Esophagus squamous epithelium (tissue), 5 donors: ENCODE measurements at regions of chr6 and their contacts with region 1.

Region 1: DNA sequence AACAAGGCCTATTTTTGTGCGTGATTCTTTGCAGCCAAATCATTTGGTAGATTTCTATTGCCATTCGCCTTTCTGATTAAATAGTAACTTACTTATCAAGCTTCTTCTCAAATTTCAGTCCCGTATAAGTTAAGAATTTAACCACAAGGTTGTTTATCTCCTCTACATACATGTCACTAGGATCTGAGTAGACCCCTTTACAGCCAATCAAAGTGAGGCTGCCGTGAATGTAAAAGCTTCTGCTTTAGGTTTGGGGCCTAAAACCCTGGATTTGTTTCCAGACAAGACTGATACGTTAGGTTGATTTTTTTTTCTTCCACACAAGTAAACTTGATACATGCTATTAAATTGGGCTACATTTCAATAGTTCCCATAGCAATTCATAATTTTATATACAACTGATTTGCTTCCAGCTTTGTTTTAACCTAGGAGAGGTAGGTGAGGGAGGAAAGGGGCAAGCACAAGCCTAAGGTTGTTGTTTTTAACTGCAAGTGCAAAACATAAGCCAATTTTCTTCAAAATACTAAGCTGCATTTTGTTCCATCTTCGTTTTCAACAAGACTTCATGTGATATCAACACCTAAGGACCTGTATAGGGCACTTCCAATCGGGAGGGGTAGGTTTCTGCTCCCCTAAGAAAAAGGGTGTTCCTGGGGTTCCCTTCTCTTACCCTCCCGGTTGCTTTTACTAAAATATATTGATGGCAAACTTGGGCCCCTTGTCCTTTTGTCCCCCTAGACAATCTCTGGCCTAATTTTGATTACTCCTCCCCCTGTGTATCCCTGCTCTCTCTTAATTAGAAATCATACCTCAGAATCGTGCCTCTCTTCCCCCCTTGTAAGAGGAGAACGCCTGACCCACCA is 1.7 kb downstream of the RANBP9 start:
- DNase-seq: no peak
- H3K4me3 ChIP-seq: peak overlapping the region; percentile 72 to 94 (median 86)
- H3K27ac ChIP-seq: peak overlapping the region; percentile 95 to 99 (median 98)
- H3K4me1 ChIP-seq: peaks cover 0 to 61% (median 10%) of the 10 kb centered on the region in 3 donors
- H3K27me3 ChIP-seq: no peaks in the 10 kb centered on the region
- CTCF ChIP-seq: no peak
- POLR2A ChIP-seq: no peak

Region 2: GRCh38 chr6:13487122-13488014 is 222.6 kb before region 1 on chr6 and contains the start of gene GFOD1:
- intact Hi-C with region 1: no loop called
- DNase-seq: peak; percentile 53
- H3K4me3 ChIP-seq: peak within 1 kb of the TSS; percentile 67 to 96 (median 88)
- H3K27ac ChIP-seq: peak within 1 kb of the TSS; percentile 93 to 99 (median 96)
- H3K4me1 ChIP-seq: peaks cover 7 to 59% (median 15%) of the 10 kb centered on the region in 3 donors
- H3K27me3 ChIP-seq: no peaks in the 10 kb centered on the region
- CTCF ChIP-seq: peak in 3 of 6 experiments; percentile 35 to 48 (median 43)
- POLR2A ChIP-seq: peak in 3 of 4 donors; percentile 49 to 96 (median 95)
- total RNA-seq, gene GFOD1: 16.1 to 30.7 (median 22.9) TPM

Region 3: GRCh38 chr6:13624871-13625288 is 85.0 kb before region 1 on chr6:
- intact Hi-C with region 1: loop called (anchors 10 kb)
- DNase-seq: no peak
- H3K4me3 ChIP-seq: no peak overlapping the region
- H3K27ac ChIP-seq: no peak overlapping the region
- H3K4me1 ChIP-seq: no peaks in the 10 kb centered on the region
- H3K27me3 ChIP-seq: no peaks in the 10 kb centered on the region
- CTCF ChIP-seq: peak in 4 of 6 experiments; percentile 17 to 51 (median 37)
- POLR2A ChIP-seq: no peak